ENCODE measurements at regions of chr11 and their contacts with region 1.

Region 1: GRCh38 chr11:95790123-95790932 is at the start of gene CEP57:
- DNase-seq: peak; percentile 89
- ATAC-seq: peak; percentile 64
- H3K4me3 Mint-ChIP-seq: peak within 1 kb of the TSS; percentile 95
- H3K27ac Mint-ChIP-seq: peak within 1 kb of the TSS; percentile 100
- H3K4me1 Mint-ChIP-seq: peaks cover 44% of the 10 kb centered on the region
- H3K27me3 Mint-ChIP-seq: no peaks in the 10 kb centered on the region
- total RNA-seq, gene CEP57: 101 to 106 TPM

Region 2: DNA sequence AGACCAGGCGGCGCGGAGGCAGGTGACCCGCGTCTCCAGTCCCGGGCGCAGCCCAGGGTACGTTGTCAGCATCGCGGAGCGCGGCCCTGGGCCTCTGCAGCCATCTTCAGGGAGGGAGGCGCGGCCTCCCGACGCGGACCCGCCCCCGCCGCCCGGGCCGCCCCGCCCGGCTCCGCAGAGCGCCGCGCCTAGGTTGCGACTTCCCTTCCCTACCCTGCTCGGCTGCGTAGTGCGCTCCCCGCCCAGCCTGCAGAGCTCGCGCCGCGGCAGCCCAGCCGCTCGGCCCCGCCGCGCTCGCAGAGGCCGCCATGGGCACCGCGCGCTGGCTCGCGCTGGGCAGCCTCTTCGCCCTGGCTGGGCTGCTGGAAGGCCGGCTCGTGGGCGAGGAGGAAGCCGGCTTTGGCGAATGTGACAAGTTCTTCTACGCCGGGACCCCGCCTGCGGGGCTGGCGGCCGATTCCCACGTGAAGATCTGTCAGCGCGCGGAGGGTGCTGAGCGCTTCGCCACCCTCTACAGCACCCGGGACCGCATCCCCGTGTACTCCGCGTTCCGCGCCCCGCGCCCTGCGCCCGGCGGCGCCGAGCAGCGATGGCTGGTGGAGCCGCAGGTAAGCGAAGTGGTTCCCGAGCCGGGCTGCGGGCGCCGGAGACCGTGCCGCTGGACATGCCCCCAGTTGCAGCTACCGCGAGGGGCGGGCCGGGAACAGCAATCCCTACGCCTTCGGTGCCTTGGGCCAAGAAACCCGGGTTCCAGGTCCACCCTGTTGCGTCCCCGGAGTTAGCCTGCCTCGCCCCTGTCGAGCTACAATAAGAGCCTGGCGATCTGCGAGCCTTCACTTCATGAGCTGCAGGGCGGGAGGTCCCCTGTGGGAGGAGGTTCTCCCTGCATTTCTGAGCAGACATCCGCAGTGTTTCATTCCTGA is 700.4 kb before region 1 on chr11 and contains the start of gene ENDOD1:
- POLR2A ChIA-PET with region 1: interaction called, 32 read pairs
- DNase-seq: peak; percentile 92
- ATAC-seq: peak; percentile 95
- H3K4me3 Mint-ChIP-seq: peak within 1 kb of the TSS; percentile 93
- H3K27ac Mint-ChIP-seq: peak within 1 kb of the TSS; percentile 98
- H3K4me1 Mint-ChIP-seq: peaks cover 54% of the 10 kb centered on the region
- H3K27me3 Mint-ChIP-seq: no peaks in the 10 kb centered on the region
- total RNA-seq, gene ENDOD1: 23.8 TPM

Region 3: GRCh38 chr11:95699631-95700470 is 90.5 kb before region 1 on chr11:
- POLR2A ChIA-PET with region 1: interaction called, 12 read pairs
- DNase-seq: no peak
- ATAC-seq: peak; percentile 62
- H3K4me3 Mint-ChIP-seq: peak overlapping the region; percentile 81
- H3K27ac Mint-ChIP-seq: peak overlapping the region; percentile 91
- H3K4me1 Mint-ChIP-seq: peaks cover 48% of the 10 kb centered on the region
- H3K27me3 Mint-ChIP-seq: no peaks in the 10 kb centered on the region

Region 4: GRCh38 chr11:95863486-95864140 is 73.3 kb after region 1 on chr11:
- POLR2A ChIA-PET with region 1: no interaction called
- DNase-seq: no peak
- ATAC-seq: no peak
- H3K4me3 Mint-ChIP-seq: no peak overlapping the region
- H3K27ac Mint-ChIP-seq: no peak overlapping the region
- H3K4me1 Mint-ChIP-seq: no peaks in the 10 kb centered on the region
- H3K27me3 Mint-ChIP-seq: no peaks in the 10 kb centered on the region

Region 5: DNA sequence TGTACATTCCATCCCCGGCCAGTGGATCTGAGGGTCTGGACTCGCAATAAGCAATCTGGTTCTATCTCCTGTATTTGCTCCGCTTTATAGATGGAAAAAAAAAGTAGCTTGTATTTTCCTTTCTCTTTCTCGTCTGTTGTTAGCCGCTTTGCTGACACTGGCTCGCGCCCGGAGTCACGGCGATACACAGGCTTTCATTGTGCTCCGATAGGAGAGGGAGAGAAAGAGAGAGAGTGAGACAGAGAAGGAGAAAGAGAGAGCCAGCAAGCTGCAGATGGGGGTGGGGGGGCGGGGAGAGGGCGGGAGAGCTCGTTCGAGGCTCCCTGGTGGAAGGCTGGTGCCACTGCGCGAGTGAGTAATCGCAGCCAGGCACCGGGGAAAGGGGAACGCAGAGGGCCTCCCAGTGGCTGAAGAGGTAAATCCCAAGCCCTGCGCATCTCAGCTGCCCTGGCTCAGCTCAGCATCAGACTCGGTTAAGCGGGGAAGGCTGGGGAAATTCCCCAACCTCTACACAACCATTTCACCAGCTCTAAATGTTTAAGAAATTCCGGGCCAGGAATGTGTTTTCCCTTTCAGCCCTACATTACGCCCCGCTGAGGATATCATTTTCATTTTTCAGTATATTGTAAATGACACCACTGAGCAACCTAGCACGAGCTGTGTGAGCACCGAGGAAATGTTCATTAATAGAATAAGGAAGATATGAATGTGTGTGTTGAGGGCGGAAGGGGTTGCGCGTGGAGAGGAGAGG is 552.8 kb after region 1 on chr11 and contains the start of gene MAML2:
- POLR2A ChIA-PET with region 1: interaction called, 16 read pairs
- DNase-seq: peak; percentile 82
- ATAC-seq: peak; percentile 80
- H3K4me3 Mint-ChIP-seq: peak within 1 kb of the TSS; percentile 96
- H3K27ac Mint-ChIP-seq: peak within 1 kb of the TSS; percentile 90
- H3K4me1 Mint-ChIP-seq: peaks cover 24% of the 10 kb centered on the region
- H3K27me3 Mint-ChIP-seq: no peaks in the 10 kb centered on the region
- total RNA-seq, gene MAML2: 18.6 to 20.5 TPM